CD4-positive, alpha-beta memory T cell (primary cell): ENCODE measurements at regions of chr5 and their contacts with region 1.

Region 1: DNA sequence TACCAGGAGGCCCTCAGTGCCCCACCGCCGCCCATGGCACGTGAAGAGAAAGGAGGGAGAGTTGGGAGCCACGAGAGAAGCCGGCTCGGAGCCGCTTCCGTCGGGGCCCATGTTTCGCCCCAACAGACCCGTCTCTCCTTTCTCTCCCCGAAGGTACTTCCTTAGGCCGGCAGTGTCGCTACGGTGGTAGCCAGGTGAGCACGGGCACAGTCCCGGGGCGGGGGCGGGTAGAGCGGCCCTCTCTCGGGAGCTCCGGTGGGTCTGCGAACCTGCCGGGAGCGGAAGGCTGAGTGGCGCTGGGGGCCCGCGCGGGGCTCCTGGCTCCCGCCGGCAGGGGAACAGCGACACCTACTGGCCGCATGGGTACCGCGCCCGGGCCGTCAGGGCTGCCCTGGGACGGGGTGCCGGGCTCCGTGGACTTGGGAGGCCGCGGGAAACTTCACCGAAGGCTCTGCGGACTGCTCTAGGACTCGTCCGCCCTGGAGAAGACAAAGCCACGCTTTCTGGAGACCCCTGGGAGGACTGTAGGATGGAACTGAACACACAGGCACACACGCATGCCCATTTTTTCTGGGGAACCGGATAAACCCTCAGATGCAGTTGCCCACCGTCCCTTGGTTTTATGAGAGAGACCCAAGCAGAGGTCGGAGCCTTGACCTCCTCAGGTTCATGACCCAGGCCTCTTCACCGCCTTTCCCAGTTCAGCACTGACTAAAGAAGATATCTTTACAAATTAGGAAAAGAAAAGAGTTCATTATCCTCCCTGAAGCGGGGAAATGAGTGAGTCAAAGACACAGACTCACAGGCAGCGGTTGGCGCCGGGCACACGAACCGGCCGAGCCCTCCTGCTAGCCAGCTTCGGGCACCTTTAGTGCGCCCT is 202.5 kb downstream of the MEF2C start:
- DNase-seq: peak; percentile 62 to 82 (median 71)
- H3K4me3 ChIP-seq: no peak overlapping the region
- H3K4me3 Mint-ChIP-seq: peak overlapping the region in 7 of 8 donors; percentile 6 to 69 (median 56)
- H3K27ac ChIP-seq: no peak overlapping the region
- H3K27ac Mint-ChIP-seq: peak overlapping the region in 3 of 7 donors; percentile 19 to 84 (median 66)
- H3K4me1 ChIP-seq: peaks cover 18% of the 10 kb centered on the region
- H3K4me1 Mint-ChIP-seq: peaks cover 5 to 31% (median 19%) of the 10 kb centered on the region in 4 donors
- H3K27me3 ChIP-seq: peaks cover 74% of the 10 kb centered on the region
- H3K27me3 Mint-ChIP-seq: peaks cover 59 to 69% of the 10 kb centered on the region in 2 donors

Region 2: GRCh38 chr5:86880785-86881492 is 1799.6 kb before region 1 on chr5:
- CTCF ChIA-PET with region 1: no interaction called
- POLR2A ChIA-PET with region 1: no interaction called
- intact Hi-C with region 1: loop called (anchors 2 kb)
- DNase-seq: peak; percentile 37 to 50 (median 45)
- H3K4me3 ChIP-seq: no peak overlapping the region
- H3K4me3 Mint-ChIP-seq: no peak overlapping the region
- H3K27ac ChIP-seq: no peak overlapping the region
- H3K27ac Mint-ChIP-seq: peak overlapping the region in 1 of 7 donors; percentile 13
- H3K4me1 ChIP-seq: no peaks in the 10 kb centered on the region
- H3K4me1 Mint-ChIP-seq: peaks cover 0 to 1% (median 0%) of the 10 kb centered on the region in 4 donors
- H3K27me3 ChIP-seq: no peaks in the 10 kb centered on the region
- H3K27me3 Mint-ChIP-seq: no peaks in the 10 kb centered on the region

Region 3: GRCh38 chr5:87412630-87413342 is 1267.7 kb before region 1 on chr5 and contains the start of gene CCNH:
- CTCF ChIA-PET with region 1: no interaction called
- POLR2A ChIA-PET with region 1: no interaction called
- intact Hi-C with region 1: loop called (anchors 10 kb)
- DNase-seq: peak; percentile 94 to 98 (median 97)
- H3K4me3 ChIP-seq: peak within 1 kb of the TSS; percentile 92 to 96
- H3K4me3 Mint-ChIP-seq: peak within 1 kb of the TSS; percentile 94 to 99 (median 98)
- H3K27ac ChIP-seq: peak within 1 kb of the TSS; percentile 100
- H3K27ac Mint-ChIP-seq: peak within 1 kb of the TSS; percentile 88 to 100 (median 99)
- H3K4me1 ChIP-seq: peaks cover 46% of the 10 kb centered on the region
- H3K4me1 Mint-ChIP-seq: peaks cover 38 to 54% (median 42%) of the 10 kb centered on the region in 4 donors
- H3K27me3 ChIP-seq: no peaks in the 10 kb centered on the region
- H3K27me3 Mint-ChIP-seq: no peaks in the 10 kb centered on the region
- total RNA-seq, gene CCNH: 93.9 to 98.6 TPM

Region 4: GRCh38 chr5:87780831-87781760 is 899.4 kb before region 1 on chr5:
- CTCF ChIA-PET with region 1: interaction called, 75 read pairs
- POLR2A ChIA-PET with region 1: no interaction called
- intact Hi-C with region 1: loop called (anchors 1 kb)
- DNase-seq: peak; percentile 67 to 76 (median 72)
- H3K4me3 ChIP-seq: no peak overlapping the region
- H3K4me3 Mint-ChIP-seq: no peak overlapping the region
- H3K27ac ChIP-seq: no peak overlapping the region
- H3K27ac Mint-ChIP-seq: no peak overlapping the region
- H3K4me1 ChIP-seq: no peaks in the 10 kb centered on the region
- H3K4me1 Mint-ChIP-seq: peaks cover 0 to 2% (median under 1%) of the 10 kb centered on the region in 4 donors
- H3K27me3 ChIP-seq: peaks cover 7% of the 10 kb centered on the region
- H3K27me3 Mint-ChIP-seq: peaks cover 8 to 15% of the 10 kb centered on the region in 2 donors

Region 5: DNA sequence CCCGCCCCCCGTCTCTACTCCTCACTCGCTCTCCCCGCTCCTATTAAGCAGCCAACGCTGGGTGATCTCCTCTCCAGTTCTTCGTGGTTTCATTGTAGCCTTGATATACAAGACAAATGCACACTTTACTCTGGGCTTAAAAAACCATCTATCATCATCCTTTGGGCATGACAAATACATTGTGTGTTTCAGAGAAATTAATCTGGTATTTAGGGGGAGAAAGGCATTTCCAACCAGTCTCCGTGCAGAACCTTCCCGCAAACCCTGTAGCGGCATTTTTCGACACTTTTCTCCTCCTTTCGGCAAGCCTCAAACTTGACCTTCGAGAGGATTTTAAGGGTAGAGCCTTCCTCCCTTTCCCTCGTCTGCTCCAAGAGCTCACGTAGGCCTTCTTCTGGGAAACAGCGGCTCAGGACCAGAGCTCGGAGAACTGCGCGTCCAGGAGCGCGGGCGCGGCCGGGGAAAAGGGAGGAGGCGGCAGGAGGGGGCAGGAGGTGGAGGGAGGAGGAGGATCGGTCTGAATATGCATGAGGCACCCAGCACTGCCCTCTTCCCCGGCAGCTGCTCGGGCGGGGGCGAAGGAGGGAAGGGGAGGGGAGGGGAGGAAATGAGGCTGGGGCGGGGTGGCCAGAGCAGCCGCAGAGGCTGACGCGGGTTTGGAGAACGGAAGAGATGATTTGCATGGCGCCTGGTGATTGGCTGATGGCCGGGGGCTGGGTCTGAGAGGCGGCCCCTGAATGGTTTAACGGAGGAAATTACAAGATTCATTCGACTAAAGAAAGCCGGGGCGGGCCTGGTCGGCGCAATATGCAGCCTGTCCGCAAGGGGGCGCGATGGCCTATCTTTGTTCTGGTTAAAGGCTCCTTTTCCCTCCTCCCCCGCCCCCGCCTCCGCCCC is 539.4 kb before region 1 on chr5:
- CTCF ChIA-PET with region 1: no interaction called
- POLR2A ChIA-PET with region 1: no interaction called
- intact Hi-C with region 1: loop called (anchors 2 kb)
- DNase-seq: peak; percentile 84 to 89 (median 87)
- H3K4me3 ChIP-seq: peak overlapping the region; percentile 34 to 49
- H3K4me3 Mint-ChIP-seq: no peak overlapping the region
- H3K27ac ChIP-seq: no peak overlapping the region
- H3K27ac Mint-ChIP-seq: no peak overlapping the region
- H3K4me1 ChIP-seq: peaks cover 39% of the 10 kb centered on the region
- H3K4me1 Mint-ChIP-seq: peaks cover 11 to 24% (median 16%) of the 10 kb centered on the region in 4 donors
- H3K27me3 ChIP-seq: peaks cover 44% of the 10 kb centered on the region
- H3K27me3 Mint-ChIP-seq: peaks cover 23 to 26% of the 10 kb centered on the region in 2 donors

Region 6: GRCh38 chr5:88256872-88257271 is 423.6 kb before region 1 on chr5:
- CTCF ChIA-PET with region 1: no interaction called
- POLR2A ChIA-PET with region 1: no interaction called
- intact Hi-C with region 1: no loop called
- DNase-seq: no peak
- H3K4me3 ChIP-seq: no peak overlapping the region
- H3K4me3 Mint-ChIP-seq: no peak overlapping the region
- H3K27ac ChIP-seq: no peak overlapping the region
- H3K27ac Mint-ChIP-seq: peak overlapping the region in 1 of 7 donors; percentile 30
- H3K4me1 ChIP-seq: peaks cover 5% of the 10 kb centered on the region
- H3K4me1 Mint-ChIP-seq: peaks cover 16 to 53% (median 42%) of the 10 kb centered on the region in 4 donors
- H3K27me3 ChIP-seq: no peaks in the 10 kb centered on the region
- H3K27me3 Mint-ChIP-seq: no peaks in the 10 kb centered on the region

Region 7: GRCh38 chr5:88268385-88269184 is 411.9 kb before region 1 on chr5 and contains the start of gene TMEM161B:
- CTCF ChIA-PET with region 1: no interaction called
- POLR2A ChIA-PET with region 1: no interaction called
- intact Hi-C with region 1: loop called (anchors 2 kb)
- DNase-seq: peak; percentile 92 to 98 (median 96)
- H3K4me3 ChIP-seq: peak within 1 kb of the TSS; percentile 80 to 94
- H3K4me3 Mint-ChIP-seq: peak within 1 kb of the TSS; percentile 95 to 100 (median 100)
- H3K27ac ChIP-seq: peak within 1 kb of the TSS; percentile 87
- H3K27ac Mint-ChIP-seq: peak within 1 kb of the TSS; percentile 97 to 100 (median 99)
- H3K4me1 ChIP-seq: peaks cover 50% of the 10 kb centered on the region
- H3K4me1 Mint-ChIP-seq: peaks cover 34 to 75% (median 50%) of the 10 kb centered on the region in 4 donors
- H3K27me3 ChIP-seq: no peaks in the 10 kb centered on the region
- H3K27me3 Mint-ChIP-seq: no peaks in the 10 kb centered on the region
- total RNA-seq, gene TMEM161B: 32.3 to 33.7 TPM

Region 8: GRCh38 chr5:88450239-88450638 is 230.3 kb before region 1 on chr5:
- CTCF ChIA-PET with region 1: no interaction called
- POLR2A ChIA-PET with region 1: no interaction called
- intact Hi-C with region 1: no loop called
- DNase-seq: no peak
- H3K4me3 ChIP-seq: no peak overlapping the region
- H3K4me3 Mint-ChIP-seq: no peak overlapping the region
- H3K27ac ChIP-seq: no peak overlapping the region
- H3K27ac Mint-ChIP-seq: no peak overlapping the region
- H3K4me1 ChIP-seq: no peaks in the 10 kb centered on the region
- H3K4me1 Mint-ChIP-seq: no peaks in the 10 kb centered on the region
- H3K27me3 ChIP-seq: no peaks in the 10 kb centered on the region
- H3K27me3 Mint-ChIP-seq: peaks cover 7 to 8% of the 10 kb centered on the region in 2 donors

Region 9: GRCh38 chr5:88690409-88691229 is 10.1 kb after region 1 on chr5:
- CTCF ChIA-PET with region 1: interaction called, 35 read pairs
- POLR2A ChIA-PET with region 1: no interaction called
- intact Hi-C with region 1: loop called (anchors 1 kb)
- DNase-seq: peak; percentile 54 to 73 (median 69)
- H3K4me3 ChIP-seq: no peak overlapping the region
- H3K4me3 Mint-ChIP-seq: peak overlapping the region; percentile 43 to 87 (median 73)
- H3K27ac ChIP-seq: no peak overlapping the region
- H3K27ac Mint-ChIP-seq: peak overlapping the region in 5 of 7 donors; percentile 40 to 93 (median 77)
- H3K4me1 ChIP-seq: peaks cover 12% of the 10 kb centered on the region
- H3K4me1 Mint-ChIP-seq: peaks cover 6 to 30% (median 10%) of the 10 kb centered on the region in 4 donors
- H3K27me3 ChIP-seq: peaks cover 85% of the 10 kb centered on the region
- H3K27me3 Mint-ChIP-seq: peaks cover 74 to 83% of the 10 kb centered on the region in 2 donors